H1 (cell line): ENCODE measurements at regions of chr20 and their contacts with region 1.

Region 1: DNA sequence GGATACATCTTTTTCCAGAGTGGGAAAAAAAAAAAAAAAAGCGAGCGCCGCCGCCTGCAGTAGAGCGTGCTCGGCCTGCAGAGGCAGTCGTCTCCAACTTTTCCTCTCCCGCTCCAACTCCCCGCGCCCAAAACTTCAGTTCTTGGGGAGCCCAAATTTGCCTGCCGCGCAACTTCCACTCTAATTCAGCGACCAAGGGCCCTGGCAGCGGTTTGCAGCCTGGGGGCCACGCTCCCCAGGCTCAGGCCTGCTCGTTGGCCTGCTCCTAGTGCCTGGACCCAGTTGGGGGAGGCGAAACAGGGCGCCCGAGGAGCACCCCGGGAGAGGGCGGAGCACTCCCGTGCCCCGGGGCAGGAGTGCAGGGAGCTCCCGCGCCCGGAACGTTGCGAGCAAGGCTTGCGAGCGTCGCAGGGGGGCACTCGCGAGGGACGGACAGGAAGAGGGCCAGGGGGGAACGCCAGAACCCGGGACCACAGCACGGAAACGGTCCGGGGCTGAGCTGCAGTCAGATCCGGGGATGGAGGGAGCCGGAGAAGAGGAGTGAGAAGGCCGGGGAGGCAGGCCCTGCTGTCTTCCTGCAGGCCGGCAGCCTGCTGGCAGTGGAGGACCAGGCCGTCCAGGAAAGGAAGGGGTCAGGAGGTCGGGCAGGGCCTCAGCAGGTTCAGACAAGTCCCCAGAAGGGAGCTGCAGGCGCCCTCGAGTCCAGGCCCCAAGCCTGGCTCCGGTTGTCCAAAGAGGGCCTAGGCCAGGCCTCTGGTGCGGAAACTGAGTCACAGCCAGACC is at the start of gene STX16:
- DNase-seq: peak; percentile 79 to 93
- H3K4me3 ChIP-seq: peak within 1 kb of the TSS; percentile 63 to 90 (median 82)
- H3K27ac ChIP-seq: peak within 1 kb of the TSS; percentile 84
- H3K4me1 ChIP-seq: peaks cover 5 to 10% (median 9%) of the 10 kb centered on the region in 4 experiments; a peak in 6 of 7 replicates
- H3K27me3 ChIP-seq: peaks cover 0 to 3% (median 0%) of the 10 kb centered on the region in 4 experiments; a peak in 2 of 7 replicates
- CTCF ChIP-seq: peak; percentile 51 to 60 (median 53)
- EP300 ChIP-seq: peak; percentile 51 to 90
- POLR2A ChIP-seq: peak; percentile 33 to 67; a peak in 2 of 3 replicates
- RAD21 ChIP-seq: peak; percentile 55 to 56
- total RNA-seq, gene STX16: 61.6 and 64.4 TPM in 2 replicates

Region 2: DNA sequence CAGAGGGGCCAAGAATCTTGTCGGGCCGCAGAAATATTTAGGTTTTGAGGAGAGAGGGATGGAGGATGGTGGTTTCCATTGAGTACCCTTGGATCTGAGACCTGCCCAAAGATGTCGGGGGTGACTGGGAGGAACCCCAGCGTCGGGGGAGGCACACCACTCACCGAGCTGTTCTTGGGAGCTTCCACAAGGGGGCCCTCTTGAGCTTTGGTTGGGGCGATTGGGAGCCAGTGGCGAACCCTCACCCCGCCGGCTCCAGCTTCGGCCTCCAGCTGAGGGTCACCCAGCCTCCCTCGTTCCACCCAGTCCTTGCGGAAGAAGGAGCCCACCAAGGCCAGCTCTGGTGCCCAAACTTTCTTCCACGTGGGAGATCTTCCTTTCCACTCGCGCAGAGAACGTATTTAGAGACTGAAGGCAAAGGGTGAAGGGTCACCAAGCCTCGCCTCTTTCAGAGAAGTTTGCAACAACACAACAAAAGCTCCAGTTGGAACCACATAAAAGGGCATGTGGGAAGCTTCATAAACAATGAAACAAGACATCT is 169.4 kb before region 1 on chr20:
- CTCF ChIA-PET with region 1: interaction called, 57 read pairs
- POLR2A ChIA-PET with region 1: interaction called, 7 read pairs
- DNase-seq: peak; percentile 36 to 96
- H3K4me3 ChIP-seq: peak overlapping the region in 1 of 4 experiments; percentile 30; a peak in 1 of 8 replicates
- H3K27ac ChIP-seq: no peak overlapping the region
- H3K4me1 ChIP-seq: peaks cover 0 to 4% (median 3%) of the 10 kb centered on the region in 4 experiments; a peak in 5 of 7 replicates
- H3K27me3 ChIP-seq: no peaks in the 10 kb centered on the region; a peak in 1 of 7 replicates
- CTCF ChIP-seq: peak; percentile 75 to 86 (median 83)
- EP300 ChIP-seq: no peak
- POLR2A ChIP-seq: no peak
- RAD21 ChIP-seq: peak; percentile 97 to 98

Region 3: DNA sequence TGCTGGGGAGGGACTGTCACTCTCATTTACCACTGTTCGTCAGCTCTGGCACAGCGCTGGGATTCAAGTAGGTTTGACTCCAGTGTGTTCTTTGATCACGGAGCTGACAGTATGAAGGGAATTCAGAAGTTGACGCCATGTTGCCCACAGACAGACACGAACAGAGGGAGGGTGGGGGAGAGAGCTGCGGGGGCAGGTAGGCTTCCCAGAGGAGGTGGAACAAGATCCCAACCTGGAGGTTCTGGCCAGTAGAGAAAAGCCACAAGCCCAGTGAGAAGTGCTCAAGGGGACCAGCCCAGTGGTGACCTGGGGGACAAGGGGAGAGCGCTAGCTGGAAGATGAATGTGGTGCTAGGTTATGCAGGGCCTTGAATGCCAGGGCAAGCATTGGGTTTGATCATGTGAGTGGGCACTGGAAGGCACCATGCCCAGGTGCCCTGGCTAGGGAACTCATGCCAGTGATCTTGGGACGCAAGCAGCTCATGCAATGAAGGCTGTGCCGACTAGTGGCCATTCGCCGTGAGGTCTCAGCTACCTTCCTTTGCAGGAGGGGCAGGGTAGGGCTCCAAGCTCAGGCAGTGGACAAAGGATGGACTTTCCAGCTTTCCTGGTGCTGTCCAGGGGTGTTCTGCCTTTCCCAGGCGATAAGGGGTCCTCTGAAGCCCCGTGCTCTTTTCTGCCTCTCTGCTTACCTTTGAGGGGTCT is 85.4 kb before region 1 on chr20:
- CTCF ChIA-PET with region 1: no interaction called
- POLR2A ChIA-PET with region 1: no interaction called
- DNase-seq: no peak
- H3K4me3 ChIP-seq: no peak overlapping the region
- H3K27ac ChIP-seq: no peak overlapping the region
- H3K4me1 ChIP-seq: no peaks in the 10 kb centered on the region; a peak in 2 of 7 replicates
- H3K27me3 ChIP-seq: no peaks in the 10 kb centered on the region; a peak in 3 of 7 replicates
- CTCF ChIP-seq: no peak
- EP300 ChIP-seq: no peak
- POLR2A ChIP-seq: no peak
- RAD21 ChIP-seq: no peak

Region 4: GRCh38 chr20:58640446-58640845 is 10.5 kb before region 1 on chr20:
- CTCF ChIA-PET with region 1: interaction called, 11 read pairs
- POLR2A ChIA-PET with region 1: interaction called, 3 read pairs
- DNase-seq: no peak
- H3K4me3 ChIP-seq: no peak overlapping the region
- H3K27ac ChIP-seq: no peak overlapping the region
- H3K4me1 ChIP-seq: peaks cover 0 to 2% (median 0%) of the 10 kb centered on the region in 4 experiments; a peak in 1 of 7 replicates
- H3K27me3 ChIP-seq: no peaks in the 10 kb centered on the region; a peak in 1 of 7 replicates
- CTCF ChIP-seq: no peak
- EP300 ChIP-seq: no peak
- POLR2A ChIP-seq: no peak
- RAD21 ChIP-seq: no peak

Region 5: DNA sequence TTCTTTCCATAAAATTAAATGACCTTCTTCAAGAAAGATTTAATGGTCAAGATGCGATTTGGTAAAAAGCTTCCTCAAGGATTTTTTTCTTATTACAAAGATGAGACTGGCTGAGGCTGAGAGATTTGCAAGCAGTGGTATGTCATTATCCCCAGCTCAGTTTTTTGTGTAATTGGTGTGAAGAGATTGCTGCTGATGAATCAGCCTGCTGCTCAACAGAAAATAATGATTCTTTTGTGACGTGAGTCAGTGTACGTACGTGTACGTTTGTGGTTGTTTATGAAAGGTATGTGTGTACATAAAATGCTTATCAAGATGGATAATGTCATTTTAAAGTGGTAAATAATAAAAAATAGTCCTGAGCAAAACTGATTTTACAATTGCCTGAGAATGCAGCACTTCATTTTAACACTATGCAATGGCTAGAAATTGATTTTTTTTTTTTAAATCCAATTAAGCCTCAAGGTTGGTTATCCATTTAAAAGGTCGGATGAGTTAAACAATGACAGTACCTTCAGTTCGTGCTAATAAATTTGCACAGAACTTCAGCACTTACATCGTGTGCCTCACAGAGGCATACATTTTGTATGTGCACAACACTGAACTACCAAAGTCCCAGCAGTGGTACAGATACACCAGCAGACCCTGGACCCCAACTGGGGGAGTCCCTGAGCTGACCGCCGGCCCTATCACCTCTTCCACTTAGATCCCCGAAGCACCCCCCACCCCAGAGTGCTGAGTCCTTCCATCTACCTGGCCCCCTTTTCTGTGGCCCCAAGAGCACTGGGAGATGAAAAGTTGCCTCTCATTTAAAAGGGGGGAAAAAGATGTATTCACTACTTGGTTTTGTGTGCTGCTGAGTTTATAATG is 31.9 kb after region 1 on chr20:
- CTCF ChIA-PET with region 1: interaction called, 3 read pairs
- POLR2A ChIA-PET with region 1: interaction called, 242 read pairs
- DNase-seq: peak in 1 of 2 experiments; percentile 24
- H3K4me3 ChIP-seq: no peak overlapping the region
- H3K27ac ChIP-seq: no peak overlapping the region
- H3K4me1 ChIP-seq: peaks cover 0 to 3% (median under 1%) of the 10 kb centered on the region in 4 experiments; a peak in 3 of 7 replicates
- H3K27me3 ChIP-seq: no peaks in the 10 kb centered on the region
- CTCF ChIP-seq: no peak
- EP300 ChIP-seq: no peak
- POLR2A ChIP-seq: no peak
- RAD21 ChIP-seq: no peak

Region 6: GRCh38 chr20:58703264-58703663 is 52.3 kb after region 1 on chr20:
- CTCF ChIA-PET with region 1: interaction called, 11 read pairs
- POLR2A ChIA-PET with region 1: interaction called, 54 read pairs
- DNase-seq: peak in 1 of 2 experiments; percentile 47
- H3K4me3 ChIP-seq: no peak overlapping the region
- H3K27ac ChIP-seq: no peak overlapping the region
- H3K4me1 ChIP-seq: peaks cover 0 to 4% (median 1%) of the 10 kb centered on the region in 4 experiments; a peak in 1 of 7 replicates
- H3K27me3 ChIP-seq: no peaks in the 10 kb centered on the region
- CTCF ChIP-seq: peak; percentile 29 to 69 (median 53); a peak in 3 of 4 replicates
- EP300 ChIP-seq: no peak
- POLR2A ChIP-seq: no peak
- RAD21 ChIP-seq: peak; percentile 22 to 42; a peak in 2 of 4 replicates

Region 7: GRCh38 chr20:58818585-58819285 is 167.8 kb after region 1 on chr20:
- CTCF ChIA-PET with region 1: interaction called, 6 read pairs
- POLR2A ChIA-PET with region 1: interaction called, 19 read pairs
- DNase-seq: no peak
- H3K4me3 ChIP-seq: no peak overlapping the region
- H3K27ac ChIP-seq: no peak overlapping the region
- H3K4me1 ChIP-seq: 0 out of 7 replicates have a peak, but pooled peaks cover 0 to 2% (median 0%) of the 10 kb centered on the region in 4 experiments
- H3K27me3 ChIP-seq: no peaks in the 10 kb centered on the region
- CTCF ChIP-seq: no peak
- EP300 ChIP-seq: no peak
- POLR2A ChIP-seq: no peak
- RAD21 ChIP-seq: no peak

Region 8: GRCh38 chr20:58850693-58851174 is 199.8 kb after region 1 on chr20 and contains the start of gene GNAS-AS1:
- CTCF ChIA-PET with region 1: interaction called, 5 read pairs
- POLR2A ChIA-PET with region 1: interaction called, 16 read pairs
- DNase-seq: peak; percentile 76 to 96
- H3K4me3 ChIP-seq: peak within 1 kb of the TSS; percentile 68 to 88 (median 78)
- H3K27ac ChIP-seq: peak within 1 kb of the TSS; percentile 87
- H3K4me1 ChIP-seq: peaks cover 0 to 32% (median 15%) of the 10 kb centered on the region in 4 experiments; a peak in 6 of 7 replicates
- H3K27me3 ChIP-seq: peaks cover 16 to 47% (median 41%) of the 10 kb centered on the region in 4 experiments
- CTCF ChIP-seq: peak in 2 of 3 experiments; percentile 9 to 11; a peak in 2 of 4 replicates
- EP300 ChIP-seq: no peak
- POLR2A ChIP-seq: no peak; a peak in 1 of 3 replicates
- RAD21 ChIP-seq: no peak
- total RNA-seq, gene GNAS-AS1: 11.7 and 13.7 TPM in 2 replicates